CD4-positive, alpha-beta memory T cell (primary cell): ENCODE measurements at regions of chr7 and their contacts with region 1.

Region 1: DNA sequence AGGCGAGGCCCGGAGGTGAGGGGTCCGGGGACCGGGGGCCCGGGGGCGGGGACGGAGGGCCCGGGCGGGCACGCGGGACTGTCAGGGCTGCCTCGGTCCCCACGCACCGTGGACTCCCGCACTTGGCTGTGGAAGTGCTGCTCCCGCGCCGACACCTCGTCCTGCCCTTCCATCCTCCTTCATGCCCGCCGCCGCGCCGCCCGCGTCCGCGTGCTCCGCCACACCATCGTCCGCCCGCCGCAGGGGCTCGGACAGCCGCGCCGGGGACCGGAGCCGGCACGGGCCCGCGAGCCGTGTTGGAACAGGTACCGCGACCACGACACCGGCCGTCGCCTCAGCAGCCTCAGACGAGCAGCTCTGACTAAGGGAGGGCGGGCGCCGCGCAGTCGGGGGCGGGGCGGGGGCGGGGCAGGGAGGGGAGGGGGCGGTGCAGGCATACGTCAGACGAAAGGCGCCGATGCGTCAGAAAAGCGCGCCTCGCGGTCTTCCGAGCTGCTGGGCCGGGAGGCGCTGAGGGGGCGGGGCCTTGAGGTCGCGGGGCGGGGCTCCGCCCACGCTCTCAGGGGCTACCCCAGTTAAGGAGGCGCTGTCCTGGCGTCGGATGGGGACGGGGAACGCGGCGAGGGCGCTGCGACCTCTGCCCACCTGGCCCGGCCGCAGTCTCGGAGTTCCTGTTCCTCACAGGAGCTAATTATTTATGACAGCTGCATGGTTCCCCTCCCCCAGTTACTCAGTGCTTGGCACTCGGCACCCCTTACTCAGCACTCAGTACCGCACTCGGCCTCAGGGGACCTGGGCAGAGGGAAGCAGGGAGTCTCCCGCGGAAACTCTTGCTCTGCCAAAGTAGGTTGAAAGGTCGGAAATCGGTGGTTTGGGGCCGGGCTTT is at the start of gene LMBR1:
- DNase-seq: peak; percentile 93 to 96 (median 94)
- H3K4me3 ChIP-seq: peak within 1 kb of the TSS; percentile 67 to 80
- H3K4me3 Mint-ChIP-seq: peak within 1 kb of the TSS; percentile 90 to 96 (median 92)
- H3K27ac ChIP-seq: peak within 1 kb of the TSS; percentile 79
- H3K27ac Mint-ChIP-seq: peak within 1 kb of the TSS; percentile 92 to 97 (median 94)
- H3K4me1 ChIP-seq: peaks cover 31% of the 10 kb centered on the region
- H3K4me1 Mint-ChIP-seq: peaks cover 19 to 63% (median 37%) of the 10 kb centered on the region in 4 donors
- H3K27me3 ChIP-seq: no peaks in the 10 kb centered on the region
- H3K27me3 Mint-ChIP-seq: no peaks in the 10 kb centered on the region
- total RNA-seq, gene LMBR1: 73.9 to 97.4 TPM

Region 2: GRCh38 chr7:155298834-155299534 is 1594.1 kb before region 1 on chr7:
- CTCF ChIA-PET with region 1: no interaction called
- POLR2A ChIA-PET with region 1: no interaction called
- intact Hi-C with region 1: loop called (anchors 2 kb)
- DNase-seq: peak; percentile 95 to 99 (median 98)
- H3K4me3 ChIP-seq: peak overlapping the region; percentile 67 to 68
- H3K4me3 Mint-ChIP-seq: peak overlapping the region; percentile 90 to 96 (median 93)
- H3K27ac ChIP-seq: peak overlapping the region; percentile 87
- H3K27ac Mint-ChIP-seq: peak overlapping the region; percentile 92 to 99 (median 96)
- H3K4me1 ChIP-seq: peaks cover 44% of the 10 kb centered on the region
- H3K4me1 Mint-ChIP-seq: peaks cover 29 to 50% (median 36%) of the 10 kb centered on the region in 4 donors
- H3K27me3 ChIP-seq: no peaks in the 10 kb centered on the region
- H3K27me3 Mint-ChIP-seq: no peaks in the 10 kb centered on the region

Region 3: GRCh38 chr7:156903232-156903909 is 10.3 kb after region 1 on chr7:
- CTCF ChIA-PET with region 1: interaction called, 4 read pairs
- POLR2A ChIA-PET with region 1: interaction called, 12 read pairs
- intact Hi-C with region 1: no loop called
- DNase-seq: peak; percentile 29 to 67 (median 37)
- H3K4me3 ChIP-seq: no peak overlapping the region
- H3K4me3 Mint-ChIP-seq: peak overlapping the region in 4 of 8 donors; percentile 39 to 61 (median 49)
- H3K27ac ChIP-seq: no peak overlapping the region
- H3K27ac Mint-ChIP-seq: peak overlapping the region; percentile 8 to 79 (median 59)
- H3K4me1 ChIP-seq: peaks cover 13% of the 10 kb centered on the region
- H3K4me1 Mint-ChIP-seq: peaks cover 7 to 13% (median 10%) of the 10 kb centered on the region in 4 donors
- H3K27me3 ChIP-seq: no peaks in the 10 kb centered on the region
- H3K27me3 Mint-ChIP-seq: peaks cover 0 to 4% of the 10 kb centered on the region in 2 donors

Region 4: DNA sequence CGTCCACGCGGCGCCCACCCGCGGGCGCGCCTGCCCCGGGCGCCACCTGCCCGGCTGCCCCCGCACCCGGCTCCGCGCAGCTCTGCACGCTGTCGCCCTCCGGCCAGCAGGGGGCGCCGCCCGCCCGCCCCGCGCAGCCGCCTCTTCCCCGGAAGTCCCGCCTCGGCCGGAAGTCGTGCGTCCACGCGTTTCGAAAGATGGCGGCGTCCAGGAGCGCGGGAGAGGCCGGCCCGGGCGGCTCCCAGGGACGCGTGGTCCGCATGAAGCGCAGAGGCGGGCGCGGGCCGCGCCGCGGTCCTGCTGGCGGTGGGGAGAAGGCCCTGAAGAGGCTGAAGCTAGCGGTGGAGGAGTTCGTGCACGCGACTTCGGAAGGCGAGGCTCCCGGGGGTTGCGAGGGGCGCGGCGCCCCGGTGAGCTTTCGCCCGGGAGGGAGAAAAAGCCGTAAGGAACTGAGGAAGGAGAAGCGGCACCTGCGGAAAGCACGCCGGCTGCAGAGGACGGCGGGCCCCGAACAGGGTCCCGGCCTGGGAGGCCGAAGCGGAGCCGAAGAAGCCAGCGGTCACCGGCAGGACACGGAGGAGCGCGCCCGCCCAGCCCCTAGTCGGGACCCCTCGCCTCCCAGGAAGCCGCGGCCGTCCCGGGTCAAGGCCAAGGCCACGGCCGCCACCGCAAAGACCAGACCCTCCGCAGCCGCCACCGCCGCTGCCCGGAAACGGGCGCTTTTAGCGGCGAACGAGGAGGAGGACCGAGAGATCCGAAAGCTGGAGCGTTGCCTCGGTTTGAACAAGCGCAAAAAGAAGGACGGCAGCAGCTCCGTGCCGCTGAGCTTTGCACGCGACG is 56.7 kb after region 1 on chr7 and contains the start of gene NOM1:
- CTCF ChIA-PET with region 1: interaction called, 5 read pairs
- POLR2A ChIA-PET with region 1: interaction called, 18 read pairs
- intact Hi-C with region 1: loop called (anchors 1 kb)
- DNase-seq: peak; percentile 85 to 91 (median 89)
- H3K4me3 ChIP-seq: peak within 1 kb of the TSS; percentile 85 to 94
- H3K4me3 Mint-ChIP-seq: peak within 1 kb of the TSS; percentile 94 to 97 (median 96)
- H3K27ac ChIP-seq: peak within 1 kb of the TSS; percentile 62
- H3K27ac Mint-ChIP-seq: peak within 1 kb of the TSS; percentile 82 to 97 (median 88)
- H3K4me1 ChIP-seq: peaks cover 32% of the 10 kb centered on the region
- H3K4me1 Mint-ChIP-seq: peaks cover 17 to 28% (median 25%) of the 10 kb centered on the region in 4 donors
- H3K27me3 ChIP-seq: no peaks in the 10 kb centered on the region
- H3K27me3 Mint-ChIP-seq: peaks cover 4 to 11% of the 10 kb centered on the region in 2 donors
- total RNA-seq, gene NOM1: 31.4 to 32.5 TPM

Region 5: GRCh38 chr7:157336383-157337315 is 443.6 kb after region 1 on chr7 and contains the start of gene DNAJB6:
- CTCF ChIA-PET with region 1: no interaction called
- POLR2A ChIA-PET with region 1: interaction called, 8 read pairs
- intact Hi-C with region 1: loop called (anchors 1 kb)
- DNase-seq: peak; percentile 92 to 97 (median 97)
- H3K4me3 ChIP-seq: peak within 1 kb of the TSS; percentile 67 to 88
- H3K4me3 Mint-ChIP-seq: peak within 1 kb of the TSS; percentile 89 to 99 (median 98)
- H3K27ac ChIP-seq: peak within 1 kb of the TSS; percentile 86
- H3K27ac Mint-ChIP-seq: peak within 1 kb of the TSS; percentile 97 to 99 (median 99)
- H3K4me1 ChIP-seq: peaks cover 40% of the 10 kb centered on the region
- H3K4me1 Mint-ChIP-seq: peaks cover 19 to 52% (median 41%) of the 10 kb centered on the region in 4 donors
- H3K27me3 ChIP-seq: no peaks in the 10 kb centered on the region
- H3K27me3 Mint-ChIP-seq: peaks cover 0 to 4% of the 10 kb centered on the region in 2 donors
- total RNA-seq, gene DNAJB6: 85.6 to 90.1 TPM